ENCODE measurements at regions of chr16 and their contacts with region 1.

Region 1: GRCh38 chr16:4330277-4330874 is 14.5 kb downstream of the GLIS2 start:
- DNase-seq: peak; percentile 75 to 83
- ATAC-seq: peak; percentile 83 to 87 (median 86)
- H3K4me3 ChIP-seq: no peak overlapping the region
- H3K4me3 Mint-ChIP-seq: no peak overlapping the region
- H3K27ac ChIP-seq: no peak overlapping the region
- H3K27ac Mint-ChIP-seq: no peak overlapping the region
- H3K4me1 ChIP-seq: peaks cover 18% of the 10 kb centered on the region
- H3K4me1 Mint-ChIP-seq: peaks cover 0 to 5% of the 10 kb centered on the region in 2 donors
- H3K27me3 ChIP-seq: peaks cover 9% of the 10 kb centered on the region
- H3K27me3 Mint-ChIP-seq: peaks cover 0 to 4% of the 10 kb centered on the region in 2 donors
- CTCF ChIP-seq: peak; percentile 94

Region 2: GRCh38 chr16:4288148-4288921 is 42.0 kb before region 1 on chr16:
- intact Hi-C with region 1: loop called (anchors 1 kb)
- DNase-seq: peak; percentile 77 to 90
- ATAC-seq: peak; percentile 89 to 98 (median 97)
- H3K4me3 ChIP-seq: no peak overlapping the region
- H3K4me3 Mint-ChIP-seq: no peak overlapping the region
- H3K27ac ChIP-seq: no peak overlapping the region
- H3K27ac Mint-ChIP-seq: no peak overlapping the region
- H3K4me1 ChIP-seq: peaks cover 7% of the 10 kb centered on the region
- H3K4me1 Mint-ChIP-seq: peaks cover 4 to 10% of the 10 kb centered on the region in 2 donors
- H3K27me3 ChIP-seq: peaks cover 2% of the 10 kb centered on the region
- H3K27me3 Mint-ChIP-seq: peaks cover 5 to 28% of the 10 kb centered on the region in 2 donors
- CTCF ChIP-seq: peak; percentile 98

Region 3: GRCh38 chr16:4307215-4308037 is 22.9 kb before region 1 on chr16:
- intact Hi-C with region 1: loop called (anchors 2 kb)
- DNase-seq: peak; percentile 98
- ATAC-seq: peak; percentile 88 to 97 (median 89)
- H3K4me3 ChIP-seq: peak overlapping the region; percentile 67
- H3K4me3 Mint-ChIP-seq: peak overlapping the region; percentile 96
- H3K27ac ChIP-seq: peak overlapping the region; percentile 92
- H3K27ac Mint-ChIP-seq: peak overlapping the region; percentile 97 to 99
- H3K4me1 ChIP-seq: peaks cover 23% of the 10 kb centered on the region
- H3K4me1 Mint-ChIP-seq: peaks cover 12 to 19% of the 10 kb centered on the region in 2 donors
- H3K27me3 ChIP-seq: no peaks in the 10 kb centered on the region
- H3K27me3 Mint-ChIP-seq: no peaks in the 10 kb centered on the region
- CTCF ChIP-seq: no peak